ENCODE measurements at regions of chr7 and their contacts with region 1.

Region 1: GRCh38 chr7:144854839-144855424 is 19.1 kb upstream of the TPK1 start:
- DNase-seq: peak; percentile 60
- H3K4me3 Mint-ChIP-seq: no peak overlapping the region
- H3K27ac Mint-ChIP-seq: no peak overlapping the region
- H3K4me1 Mint-ChIP-seq: peaks cover 11% of the 10 kb centered on the region
- H3K27me3 Mint-ChIP-seq: no peaks in the 10 kb centered on the region
- CTCF ChIP-seq: peak; percentile 59

Region 2: GRCh38 chr7:144513334-144513733 is 341.6 kb before region 1 on chr7:
- CTCF ChIA-PET with region 1: no interaction called
- POLR2A ChIA-PET with region 1: no interaction called
- intact Hi-C with region 1: loop called (anchors 1 kb)
- DNase-seq: peak; percentile 49
- H3K4me3 Mint-ChIP-seq: no peak overlapping the region
- H3K27ac Mint-ChIP-seq: no peak overlapping the region
- H3K4me1 Mint-ChIP-seq: no peaks in the 10 kb centered on the region
- H3K27me3 Mint-ChIP-seq: no peaks in the 10 kb centered on the region
- CTCF ChIP-seq: peak; percentile 47

Region 3: GRCh38 chr7:144738708-144739314 is 116.1 kb before region 1 on chr7:
- CTCF ChIA-PET with region 1: interaction called, 9 read pairs
- POLR2A ChIA-PET with region 1: no interaction called
- intact Hi-C with region 1: loop called (anchors 5 kb)
- DNase-seq: peak; percentile 52
- H3K4me3 Mint-ChIP-seq: no peak overlapping the region
- H3K27ac Mint-ChIP-seq: no peak overlapping the region
- H3K4me1 Mint-ChIP-seq: peaks cover 6% of the 10 kb centered on the region
- H3K27me3 Mint-ChIP-seq: no peaks in the 10 kb centered on the region
- CTCF ChIP-seq: peak; percentile 66

Region 4: DNA sequence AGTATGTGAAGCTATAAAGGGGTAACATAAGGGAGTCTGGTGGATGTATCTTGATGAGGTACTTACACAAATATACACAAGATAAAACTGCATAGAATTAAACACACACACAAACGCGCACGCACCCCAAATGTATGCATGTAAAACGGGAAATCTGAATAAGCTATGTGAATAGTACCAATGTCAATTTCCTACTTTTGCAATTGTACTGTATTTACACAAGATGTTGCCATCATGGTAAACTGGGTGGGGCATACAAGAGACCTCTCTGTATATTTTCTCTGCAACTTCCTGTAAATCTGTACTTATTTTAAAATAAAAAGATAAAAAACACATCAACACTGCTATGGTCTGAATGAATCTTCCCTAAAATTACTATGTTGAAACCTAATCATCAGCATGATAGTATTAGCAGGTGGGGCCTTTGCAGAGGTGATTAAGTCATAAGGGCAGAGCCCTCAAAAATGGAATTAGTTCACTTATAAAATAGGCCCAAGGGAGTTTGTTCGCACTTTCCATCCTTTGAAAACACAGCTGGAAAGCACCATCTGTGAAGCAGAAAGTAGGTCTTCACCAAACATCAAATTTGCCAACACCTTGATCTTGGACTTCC is 49.2 kb before region 1 on chr7:
- CTCF ChIA-PET with region 1: no interaction called
- POLR2A ChIA-PET with region 1: no interaction called
- intact Hi-C with region 1: no loop called
- DNase-seq: no peak
- H3K4me3 Mint-ChIP-seq: no peak overlapping the region
- H3K27ac Mint-ChIP-seq: no peak overlapping the region
- H3K4me1 Mint-ChIP-seq: no peaks in the 10 kb centered on the region
- H3K27me3 Mint-ChIP-seq: no peaks in the 10 kb centered on the region
- CTCF ChIP-seq: no peak

Region 5: GRCh38 chr7:145030754-145031153 is 175.8 kb after region 1 on chr7:
- CTCF ChIA-PET with region 1: interaction called, 7 read pairs
- POLR2A ChIA-PET with region 1: no interaction called
- intact Hi-C with region 1: loop called (anchors 5 kb)
- DNase-seq: no peak
- H3K4me3 Mint-ChIP-seq: no peak overlapping the region
- H3K27ac Mint-ChIP-seq: no peak overlapping the region
- H3K4me1 Mint-ChIP-seq: no peaks in the 10 kb centered on the region
- H3K27me3 Mint-ChIP-seq: no peaks in the 10 kb centered on the region
- CTCF ChIP-seq: no peak

Region 6: DNA sequence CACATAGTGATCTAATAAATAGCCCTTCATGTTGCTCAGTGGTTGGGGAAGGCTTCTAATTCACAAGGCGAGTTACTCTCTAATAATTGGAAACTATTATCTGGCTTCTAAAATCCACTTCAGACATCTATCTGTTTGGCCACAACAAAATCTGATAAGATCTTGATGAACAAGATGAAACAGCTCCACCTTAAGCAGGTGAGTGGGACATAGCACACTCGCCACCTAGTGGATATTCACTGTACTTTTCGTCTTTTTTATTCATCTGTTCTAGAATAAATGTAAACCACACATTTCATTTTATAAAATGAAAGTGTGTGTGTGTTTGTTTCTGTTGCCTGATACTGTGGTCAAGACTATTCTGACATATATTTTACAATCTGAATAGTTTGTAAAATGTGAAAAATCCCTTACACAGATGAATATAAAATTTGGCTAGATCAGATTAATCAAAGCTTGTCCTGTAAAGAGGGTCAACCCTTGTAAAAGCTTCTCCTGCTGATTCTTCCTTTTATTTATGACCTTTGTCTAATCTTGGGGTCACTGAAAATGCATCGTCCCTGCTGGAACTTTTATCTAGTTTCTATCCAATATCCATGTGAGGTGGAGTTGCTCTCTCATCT is 1235.2 kb after region 1 on chr7:
- CTCF ChIA-PET with region 1: interaction called, 10 read pairs
- POLR2A ChIA-PET with region 1: interaction called, 3 read pairs
- intact Hi-C with region 1: loop called (anchors 1 kb)
- DNase-seq: peak; percentile 62
- H3K4me3 Mint-ChIP-seq: no peak overlapping the region
- H3K27ac Mint-ChIP-seq: no peak overlapping the region
- H3K4me1 Mint-ChIP-seq: no peaks in the 10 kb centered on the region
- H3K27me3 Mint-ChIP-seq: no peaks in the 10 kb centered on the region
- CTCF ChIP-seq: peak; percentile 67

Measured in MCF 10A (cell line).